ENCODE measurements at regions of chr3 and their contacts with region 1.

Region 1: DNA sequence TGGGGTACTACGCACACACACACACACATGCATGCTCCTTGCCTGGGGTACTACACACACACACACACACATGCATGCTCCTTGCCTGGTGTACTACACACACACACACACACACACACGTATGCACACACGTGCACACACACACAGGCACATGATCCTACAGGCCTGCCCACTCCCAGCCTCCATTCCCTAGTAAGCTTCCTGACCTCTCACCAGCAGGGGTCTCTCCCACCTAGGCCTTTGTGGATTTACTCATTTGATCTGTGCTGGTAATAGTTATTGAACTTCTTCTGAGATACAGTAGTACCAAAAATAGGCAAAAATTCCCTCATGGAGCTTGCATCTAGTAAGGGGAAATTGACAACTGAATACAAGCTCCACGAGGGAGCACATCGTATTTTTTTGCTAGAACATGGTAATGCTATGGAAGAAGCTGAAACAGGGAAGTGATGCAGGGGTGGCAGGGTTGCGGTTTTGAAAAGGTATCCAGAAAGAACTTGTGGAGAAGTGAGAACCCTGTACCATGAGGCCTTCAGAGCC is 19.1 kb downstream of the TTC21A start:
- DNase-seq: peak; percentile 72
- H3K4me3 Mint-ChIP-seq: no peak overlapping the region
- H3K27ac Mint-ChIP-seq: no peak overlapping the region
- H3K4me1 Mint-ChIP-seq: peaks cover 12% of the 10 kb centered on the region
- H3K27me3 Mint-ChIP-seq: no peaks in the 10 kb centered on the region
- CTCF ChIP-seq: peak; percentile 51

Region 2: DNA sequence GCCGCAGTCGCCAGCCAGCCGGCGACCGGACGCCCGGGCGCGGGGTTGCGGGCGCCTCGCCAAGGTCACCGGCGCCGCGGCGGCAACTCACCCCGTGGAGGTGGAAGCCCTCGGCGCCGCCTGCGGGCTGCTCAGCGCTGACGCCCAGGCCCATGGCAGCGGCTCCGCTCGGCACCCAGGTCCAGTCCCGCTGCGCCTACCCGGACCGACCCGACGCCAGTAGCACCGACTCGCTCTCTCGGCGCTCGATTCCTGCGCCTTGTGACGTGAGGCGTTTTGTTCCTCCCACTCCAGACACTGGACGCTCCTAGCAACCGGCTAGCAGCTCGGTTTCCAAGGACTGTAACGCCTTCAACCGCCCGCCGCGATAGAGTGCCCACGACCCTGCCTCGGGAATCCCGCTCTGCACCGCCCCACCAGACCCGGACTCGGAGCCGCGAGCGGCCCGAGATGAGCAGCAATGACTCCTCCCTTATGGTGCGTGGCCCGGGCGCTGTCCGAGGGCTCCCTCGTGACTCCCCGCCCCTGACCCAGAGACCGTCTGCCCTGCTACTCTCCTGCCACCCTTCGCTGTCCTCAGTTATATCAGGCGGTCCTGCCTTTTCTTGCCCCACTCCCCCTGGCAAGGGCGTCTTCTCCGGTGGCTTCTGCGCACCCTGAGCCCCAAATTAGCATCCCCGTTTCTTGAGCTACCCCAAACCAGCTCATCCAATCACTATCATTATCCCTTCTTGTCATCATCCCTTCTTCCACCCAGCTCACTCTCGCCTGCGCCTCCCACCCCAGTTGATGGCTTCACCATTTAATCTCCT is 19.0 kb before region 1 on chr3 and contains the starts of genes GORASP1 and TTC21A:
- CTCF ChIA-PET with region 1: interaction called, 17 read pairs
- POLR2A ChIA-PET with region 1: interaction called, 4 read pairs
- intact Hi-C with region 1: no loop called
- DNase-seq: peak; percentile 84
- H3K4me3 Mint-ChIP-seq: peak within 1 kb of the TSS; percentile 94
- H3K27ac Mint-ChIP-seq: peak within 1 kb of the TSS; percentile 94
- H3K4me1 Mint-ChIP-seq: peaks cover 37% of the 10 kb centered on the region
- H3K27me3 Mint-ChIP-seq: no peaks in the 10 kb centered on the region
- CTCF ChIP-seq: no peak
- total RNA-seq, gene GORASP1: 34.4 and 40.7 TPM in 2 replicates
- total RNA-seq, gene TTC21A: 2.1 and 5.4 TPM in 2 replicates

Region 3: GRCh38 chr3:39146984-39147591 is 20.5 kb after region 1 on chr3:
- CTCF ChIA-PET with region 1: interaction called, 12 read pairs
- POLR2A ChIA-PET with region 1: interaction called, 5 read pairs
- intact Hi-C with region 1: loop called (anchors 1 kb)
- DNase-seq: peak; percentile 97
- H3K4me3 Mint-ChIP-seq: peak overlapping the region; percentile 37
- H3K27ac Mint-ChIP-seq: peak overlapping the region; percentile 66
- H3K4me1 Mint-ChIP-seq: peaks cover 62% of the 10 kb centered on the region
- H3K27me3 Mint-ChIP-seq: no peaks in the 10 kb centered on the region
- CTCF ChIP-seq: no peak

Region 4: GRCh38 chr3:39260957-39261356 is 134.4 kb after region 1 on chr3:
- CTCF ChIA-PET with region 1: interaction called, 3 read pairs
- POLR2A ChIA-PET with region 1: interaction called, 3 read pairs
- intact Hi-C with region 1: loop called (anchors 1 kb)
- DNase-seq: peak; percentile 92
- H3K4me3 Mint-ChIP-seq: no peak overlapping the region
- H3K27ac Mint-ChIP-seq: peak overlapping the region; percentile 89
- H3K4me1 Mint-ChIP-seq: no peaks in the 10 kb centered on the region
- H3K27me3 Mint-ChIP-seq: peaks cover 48% of the 10 kb centered on the region
- CTCF ChIP-seq: peak; percentile 27

Measured in MCF 10A (cell line).